Activated T-helper 2 cell treated with anti-CD3 and anti-CD28 coated beads, Interferon-gamma antibody, Interleukin-2, Interleukin-4, amounts not matched to agents 10 μg/mL and 5 μg/mL and 100 μg/mL, durations not matched to agents 14 hours and 24 hours and 36 hours (primary cell): ENCODE measurements at regions of chr1 and their contacts with region 1.

Region 1: GRCh38 chr1:201223852-201224665 is 33.4 kb downstream of the IGFN1 start:
- DNase-seq: no peak
- H3K4me3 Mint-ChIP-seq: no peak overlapping the region
- H3K27ac Mint-ChIP-seq: no peak overlapping the region
- H3K4me1 Mint-ChIP-seq: no peaks in the 10 kb centered on the region
- H3K27me3 Mint-ChIP-seq: no peaks in the 10 kb centered on the region

Region 2: DNA sequence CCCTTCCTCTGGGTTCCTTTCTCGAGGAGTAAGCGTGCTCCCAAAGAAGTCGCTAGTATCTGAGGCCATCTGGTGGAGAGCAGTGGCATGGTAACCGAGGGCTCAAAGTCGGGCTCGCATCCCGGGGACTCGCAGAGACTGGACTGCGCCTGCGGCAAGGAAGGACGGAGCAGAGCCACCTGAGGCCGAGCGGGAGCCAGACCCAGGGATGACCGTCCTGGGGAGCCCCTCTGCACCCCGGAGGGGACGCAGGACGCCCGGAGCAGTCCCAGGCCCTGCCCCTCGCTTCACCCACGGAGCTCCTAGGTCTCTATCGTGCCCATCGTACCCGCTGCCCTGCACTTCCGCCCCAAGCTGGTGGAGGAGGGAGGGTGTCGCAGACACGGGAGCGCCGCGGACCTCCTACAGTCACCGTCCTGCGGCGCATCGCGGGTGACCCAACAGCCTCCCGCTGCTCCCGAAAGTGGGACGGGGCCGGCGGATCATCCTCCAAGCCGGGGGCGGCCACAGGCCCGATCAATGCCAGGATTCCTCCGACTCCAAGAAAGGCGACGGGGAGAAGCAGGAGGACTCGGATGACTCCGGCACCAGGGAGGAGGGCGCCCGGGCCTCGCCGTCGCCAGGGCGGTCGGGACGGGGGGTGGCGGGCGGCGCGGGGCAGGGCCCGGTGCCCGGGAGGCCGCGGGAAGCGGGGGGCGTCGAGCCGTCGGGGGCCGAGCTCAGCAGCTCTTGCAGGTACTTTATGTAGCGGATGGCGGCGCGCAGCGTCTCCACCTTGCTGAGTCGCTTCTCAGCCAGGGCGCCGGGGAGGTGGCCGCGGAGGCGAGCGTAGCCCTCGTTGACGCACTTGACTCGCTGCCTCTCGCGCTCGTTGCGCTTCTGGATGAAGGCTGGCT is 109.6 kb before region 1 on chr1:
- intact Hi-C with region 1: no loop called
- DNase-seq: peak; percentile 54
- H3K4me3 Mint-ChIP-seq: peak overlapping the region; percentile 80
- H3K27ac Mint-ChIP-seq: no peak overlapping the region
- H3K4me1 Mint-ChIP-seq: peaks cover 2% of the 10 kb centered on the region
- H3K27me3 Mint-ChIP-seq: peaks cover 43% of the 10 kb centered on the region

Region 3: GRCh38 chr1:201149400-201149799 is 74.7 kb before region 1 on chr1:
- intact Hi-C with region 1: loop called (anchors 1 kb)
- DNase-seq: no peak
- H3K4me3 Mint-ChIP-seq: no peak overlapping the region
- H3K27ac Mint-ChIP-seq: no peak overlapping the region
- H3K4me1 Mint-ChIP-seq: peaks cover 9% of the 10 kb centered on the region
- H3K27me3 Mint-ChIP-seq: peaks cover under 1% of the 10 kb centered on the region

Region 4: GRCh38 chr1:201194046-201194445 is 30.0 kb before region 1 on chr1:
- intact Hi-C with region 1: no loop called
- DNase-seq: no peak
- H3K4me3 Mint-ChIP-seq: no peak overlapping the region
- H3K27ac Mint-ChIP-seq: no peak overlapping the region
- H3K4me1 Mint-ChIP-seq: peaks cover 5% of the 10 kb centered on the region
- H3K27me3 Mint-ChIP-seq: peaks cover 11% of the 10 kb centered on the region

Region 5: DNA sequence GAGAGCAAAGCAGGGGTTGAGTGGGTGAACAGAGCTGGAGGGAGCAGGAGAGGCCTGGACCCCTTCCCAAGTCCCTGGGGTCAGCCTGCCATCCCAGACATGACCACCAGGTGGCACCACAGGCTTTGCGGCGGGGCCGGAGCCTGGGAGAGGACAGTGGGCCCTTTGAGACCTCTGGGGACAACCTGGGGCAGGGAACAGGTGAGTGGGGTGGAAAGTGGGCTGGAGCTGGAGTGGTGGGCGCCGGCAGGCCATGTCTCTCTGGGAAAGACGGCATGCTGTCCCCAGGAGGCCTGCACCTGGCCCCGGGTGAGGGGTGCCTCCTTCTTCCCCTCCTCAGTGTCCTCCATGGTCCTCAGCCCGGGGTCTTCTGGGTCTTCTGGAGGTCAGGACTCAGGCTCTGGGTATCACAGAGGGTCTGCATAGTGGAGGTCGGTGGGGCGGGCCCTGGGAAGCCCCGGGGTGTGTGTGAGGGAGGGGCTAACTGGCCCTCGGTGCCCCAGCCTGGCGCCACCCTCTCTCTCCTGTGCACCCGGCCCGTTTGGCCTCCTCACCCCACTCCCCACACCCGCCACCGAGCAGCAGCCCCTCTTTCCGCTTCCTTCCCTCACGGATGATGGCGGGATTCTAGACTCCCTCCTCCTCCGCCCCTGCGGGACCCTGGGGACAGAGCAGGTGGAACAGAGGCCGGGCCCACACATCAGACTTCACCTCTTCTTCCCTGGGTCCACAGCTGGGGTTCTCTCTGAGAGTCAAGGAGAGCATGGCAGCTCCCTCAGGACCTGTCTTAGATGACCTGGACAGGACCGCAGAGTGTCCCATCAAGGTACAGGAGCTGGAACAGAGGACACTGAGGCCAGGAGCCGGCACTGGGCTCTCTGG is 30.8 kb after region 1 on chr1:
- intact Hi-C with region 1: no loop called
- DNase-seq: peak; percentile 35
- H3K4me3 Mint-ChIP-seq: no peak overlapping the region
- H3K27ac Mint-ChIP-seq: no peak overlapping the region
- H3K4me1 Mint-ChIP-seq: no peaks in the 10 kb centered on the region
- H3K27me3 Mint-ChIP-seq: no peaks in the 10 kb centered on the region